Activated B cell treated with CpG ODN at 0.5 μM for 24 hours (primary cell): ENCODE measurements at regions of chr4 and their contacts with region 1.

Region 1: GRCh38 chr4:81421346-81422218 is 50.1 kb downstream of the RASGEF1B start:
- DNase-seq: no peak
- ATAC-seq: peak; percentile 99
- H3K4me3 Mint-ChIP-seq: peak overlapping the region; percentile 38
- H3K27ac Mint-ChIP-seq: peak overlapping the region; percentile 83
- H3K4me1 Mint-ChIP-seq: peaks cover 49% of the 10 kb centered on the region
- H3K27me3 Mint-ChIP-seq: no peaks in the 10 kb centered on the region
- CTCF ChIP-seq: no peak

Region 2: GRCh38 chr4:81454499-81454898 is 32.9 kb after region 1 on chr4:
- CTCF ChIA-PET with region 1: no interaction called
- POLR2A ChIA-PET with region 1: no interaction called
- intact Hi-C with region 1: loop called (anchors 2 kb)
- DNase-seq: no peak
- ATAC-seq: peak; percentile 80
- H3K4me3 Mint-ChIP-seq: no peak overlapping the region
- H3K27ac Mint-ChIP-seq: peak overlapping the region; percentile 61
- H3K4me1 Mint-ChIP-seq: peaks cover 52% of the 10 kb centered on the region
- H3K27me3 Mint-ChIP-seq: no peaks in the 10 kb centered on the region
- CTCF ChIP-seq: no peak

Region 3: GRCh38 chr4:81606801-81607501 is 185.4 kb after region 1 on chr4:
- CTCF ChIA-PET with region 1: no interaction called
- POLR2A ChIA-PET with region 1: no interaction called
- intact Hi-C with region 1: loop called (anchors 5 kb)
- DNase-seq: no peak
- ATAC-seq: peak; percentile 54
- H3K4me3 Mint-ChIP-seq: peak overlapping the region; percentile 55
- H3K27ac Mint-ChIP-seq: peak overlapping the region; percentile 86
- H3K4me1 Mint-ChIP-seq: peaks cover 58% of the 10 kb centered on the region
- H3K27me3 Mint-ChIP-seq: no peaks in the 10 kb centered on the region
- CTCF ChIP-seq: no peak

Region 4: DNA sequence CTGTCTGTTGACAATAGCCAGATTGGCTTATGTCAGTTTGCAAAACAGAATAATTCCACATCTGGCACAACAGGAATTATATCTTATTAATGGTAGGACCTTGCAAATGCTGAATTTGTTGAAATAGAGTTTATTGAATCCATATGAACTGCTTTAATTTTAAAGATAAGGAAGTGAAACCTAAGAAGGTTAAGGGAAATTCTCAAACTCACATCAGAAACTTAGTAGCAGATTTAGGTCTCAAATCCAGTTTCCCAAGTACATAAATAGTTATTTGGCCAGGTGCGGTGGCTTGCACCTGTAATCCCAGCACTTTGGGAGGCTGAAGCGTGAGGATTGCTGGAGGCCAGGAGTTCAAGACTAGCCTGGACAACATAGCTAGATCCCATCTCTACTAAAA is 835.1 kb after region 1 on chr4:
- CTCF ChIA-PET with region 1: no interaction called
- POLR2A ChIA-PET with region 1: no interaction called
- intact Hi-C with region 1: loop called (anchors 5 kb)
- DNase-seq: no peak
- ATAC-seq: peak; percentile 46
- H3K4me3 Mint-ChIP-seq: peak overlapping the region; percentile 13
- H3K27ac Mint-ChIP-seq: peak overlapping the region; percentile 67
- H3K4me1 Mint-ChIP-seq: peaks cover 53% of the 10 kb centered on the region
- H3K27me3 Mint-ChIP-seq: no peaks in the 10 kb centered on the region
- CTCF ChIP-seq: no peak

Region 5: DNA sequence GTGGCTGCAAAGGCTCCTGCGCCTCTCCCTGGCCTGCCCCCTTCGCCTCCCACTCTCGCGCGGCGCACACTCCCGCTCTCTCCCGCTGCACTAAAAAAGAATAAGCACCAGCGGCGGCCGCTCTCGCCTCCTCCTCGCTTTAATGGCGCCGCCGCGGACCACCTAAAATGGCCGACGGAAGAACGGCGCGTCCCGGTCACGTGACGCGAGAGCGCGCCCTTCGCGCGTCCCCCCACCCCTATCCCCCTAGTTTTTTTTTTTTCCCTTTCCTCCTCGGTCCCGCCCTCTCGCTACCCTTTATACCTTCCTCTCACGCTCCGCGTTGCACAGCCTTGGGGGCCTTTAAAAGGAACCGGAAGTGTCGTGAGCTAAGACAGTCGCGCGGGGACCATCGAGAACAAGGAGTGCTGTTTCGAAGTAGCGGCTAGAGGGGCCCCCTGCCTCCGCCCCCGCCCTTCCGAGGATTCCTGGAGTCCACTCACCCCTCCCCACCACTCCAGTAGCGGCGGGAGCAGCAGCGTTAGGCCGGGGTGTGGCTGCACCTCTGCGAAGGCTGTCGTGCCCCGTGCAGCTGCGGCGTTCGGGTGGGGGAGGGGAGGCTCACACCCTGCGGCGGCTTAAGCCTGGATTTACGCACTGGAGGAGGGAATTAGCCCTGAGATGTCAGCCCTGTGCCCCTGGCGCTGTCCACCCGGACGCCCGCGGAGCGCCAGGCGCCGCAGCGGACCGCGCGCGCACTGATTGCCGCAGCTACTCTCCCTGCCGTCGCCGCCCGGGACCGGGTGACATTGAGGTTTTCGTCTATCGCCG is 952.4 kb after region 1 on chr4 and contains the start of gene HNRNPD:
- CTCF ChIA-PET with region 1: no interaction called
- POLR2A ChIA-PET with region 1: no interaction called
- intact Hi-C with region 1: loop called (anchors 5 kb)
- DNase-seq: peak; percentile 83
- ATAC-seq: peak; percentile 88
- H3K4me3 Mint-ChIP-seq: peak within 1 kb of the TSS; percentile 98
- H3K27ac Mint-ChIP-seq: peak within 1 kb of the TSS; percentile 100
- H3K4me1 Mint-ChIP-seq: peaks cover 55% of the 10 kb centered on the region
- H3K27me3 Mint-ChIP-seq: no peaks in the 10 kb centered on the region
- CTCF ChIP-seq: no peak
- total RNA-seq, gene HNRNPD: 300 and 350 TPM in 2 replicates

Region 6: GRCh38 chr4:82561745-82562515 is 1140.3 kb after region 1 on chr4 and contains the start of gene TMEM150C:
- CTCF ChIA-PET with region 1: no interaction called
- POLR2A ChIA-PET with region 1: no interaction called
- intact Hi-C with region 1: no loop called
- DNase-seq: no peak
- ATAC-seq: no peak
- H3K4me3 Mint-ChIP-seq: peak within 1 kb of the TSS; percentile 79
- H3K27ac Mint-ChIP-seq: no peak within 1 kb of the TSS
- H3K4me1 Mint-ChIP-seq: peaks cover 12% of the 10 kb centered on the region
- H3K27me3 Mint-ChIP-seq: peaks cover 51% of the 10 kb centered on the region
- CTCF ChIP-seq: no peak
- total RNA-seq, gene TMEM150C: not detected in 2 replicates